CD14-positive monocyte (primary cell): ENCODE measurements at regions of chr2 and their contacts with region 1.

Region 1: GRCh38 chr2:7672027-7672684 is 754.9 kb downstream of the RNF144A start:
- DNase-seq: peak; percentile 36 to 54 (median 51)
- H3K4me3 ChIP-seq: no peak overlapping the region
- H3K4me3 Mint-ChIP-seq: no peak overlapping the region
- H3K27ac ChIP-seq: no peak overlapping the region
- H3K27ac Mint-ChIP-seq: no peak overlapping the region
- H3K4me1 ChIP-seq: peaks cover 0 to 5% of the 10 kb centered on the region in 2 donors
- H3K4me1 Mint-ChIP-seq: peaks cover 3% of the 10 kb centered on the region
- H3K27me3 ChIP-seq: no peaks in the 10 kb centered on the region
- H3K27me3 Mint-ChIP-seq: peaks cover 0 to 3% (median 3%) of the 10 kb centered on the region in 3 donors
- CTCF ChIP-seq: peak; percentile 98

Region 2: DNA sequence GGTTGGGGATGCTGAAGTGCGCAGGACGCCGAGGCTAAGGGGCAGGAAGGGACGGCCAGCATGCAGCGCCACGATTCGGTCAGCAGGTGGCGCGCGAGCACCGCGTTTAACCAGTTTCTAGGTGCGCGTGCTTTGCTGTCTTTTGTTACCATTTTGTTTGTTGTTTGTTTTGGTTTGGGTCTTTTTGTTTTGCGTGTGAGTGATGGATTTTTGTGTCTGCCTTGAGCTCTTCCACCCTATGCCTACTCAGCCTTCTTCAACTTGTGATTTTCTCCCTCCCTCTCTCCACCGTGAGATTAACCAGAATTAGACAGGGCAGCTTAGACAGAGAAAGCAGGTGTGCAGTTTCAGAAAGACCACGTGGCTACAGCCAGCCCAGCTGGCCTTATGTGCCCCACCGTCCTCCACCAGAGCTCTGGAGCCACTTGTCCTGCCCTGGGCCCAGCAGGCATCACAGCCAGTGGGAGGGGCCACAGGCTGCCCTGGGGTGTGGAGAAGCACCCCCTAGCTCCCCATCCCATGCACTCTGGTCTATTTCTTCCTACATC is 574.7 kb before region 1 on chr2:
- intact Hi-C with region 1: loop called (anchors 5 to 10 kb)
- DNase-seq: peak; percentile 59 to 75 (median 69)
- H3K4me3 ChIP-seq: no peak overlapping the region
- H3K4me3 Mint-ChIP-seq: peak overlapping the region in 1 of 2 donors; percentile 83
- H3K27ac ChIP-seq: no peak overlapping the region
- H3K27ac Mint-ChIP-seq: peak overlapping the region in 3 of 7 donors; percentile 1 to 75 (median 32)
- H3K4me1 ChIP-seq: peaks cover 3 to 4% of the 10 kb centered on the region in 2 donors
- H3K4me1 Mint-ChIP-seq: peaks cover 6% of the 10 kb centered on the region
- H3K27me3 ChIP-seq: no peaks in the 10 kb centered on the region
- H3K27me3 Mint-ChIP-seq: peaks cover 0 to 7% (median 3%) of the 10 kb centered on the region in 3 donors
- CTCF ChIP-seq: peak; percentile 97

Region 3: DNA sequence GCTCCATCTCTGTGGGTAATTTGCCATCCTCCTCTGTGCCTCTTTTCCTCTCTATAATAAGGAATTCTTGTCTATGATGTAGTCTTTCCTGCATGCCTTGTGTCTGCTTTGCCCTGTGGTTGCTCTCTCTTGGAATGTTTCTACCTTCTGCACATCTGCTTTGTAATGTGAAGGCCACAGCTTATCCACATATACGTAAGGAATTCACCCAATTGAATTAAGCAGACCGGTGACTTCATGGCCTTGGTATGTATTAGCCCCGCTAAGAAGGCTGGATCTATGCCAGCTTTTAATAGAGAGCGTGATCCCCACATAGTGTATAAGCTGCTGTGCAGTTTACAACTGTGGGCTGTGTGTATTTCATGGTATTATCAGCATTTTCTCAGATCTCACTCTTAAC is 480.2 kb before region 1 on chr2:
- intact Hi-C with region 1: no loop called
- DNase-seq: no peak
- H3K4me3 ChIP-seq: no peak overlapping the region
- H3K4me3 Mint-ChIP-seq: no peak overlapping the region
- H3K27ac ChIP-seq: no peak overlapping the region
- H3K27ac Mint-ChIP-seq: no peak overlapping the region
- H3K4me1 ChIP-seq: no peaks in the 10 kb centered on the region
- H3K4me1 Mint-ChIP-seq: peaks cover 5% of the 10 kb centered on the region
- H3K27me3 ChIP-seq: no peaks in the 10 kb centered on the region
- H3K27me3 Mint-ChIP-seq: peaks cover 0 to 3% (median 0%) of the 10 kb centered on the region in 3 donors
- CTCF ChIP-seq: no peak

Region 4: DNA sequence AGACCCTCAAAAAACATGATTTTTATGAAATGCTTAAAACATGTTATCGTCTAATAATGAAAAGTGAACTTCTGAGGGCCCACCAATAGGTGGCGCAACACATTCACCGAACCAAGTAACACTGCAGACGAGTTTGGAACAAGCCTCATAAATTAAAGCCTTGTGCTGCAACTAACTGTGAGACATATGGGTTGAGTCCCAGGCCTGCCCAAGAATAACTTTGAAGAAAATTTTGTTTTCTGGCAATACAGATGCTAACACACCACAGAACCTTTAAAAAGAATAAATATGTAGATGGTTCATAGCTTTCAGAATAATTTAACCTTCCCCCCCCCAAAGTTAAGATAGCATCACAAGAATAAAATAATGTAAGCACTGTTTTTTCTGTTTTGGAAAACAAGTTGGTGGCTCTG is 469.1 kb before region 1 on chr2:
- intact Hi-C with region 1: loop called in 1 of 2 experiments (anchors 5 kb)
- DNase-seq: peak; percentile 43 to 69 (median 58)
- H3K4me3 ChIP-seq: no peak overlapping the region
- H3K4me3 Mint-ChIP-seq: no peak overlapping the region
- H3K27ac ChIP-seq: no peak overlapping the region
- H3K27ac Mint-ChIP-seq: no peak overlapping the region
- H3K4me1 ChIP-seq: peaks cover 15 to 16% of the 10 kb centered on the region in 2 donors
- H3K4me1 Mint-ChIP-seq: peaks cover 17% of the 10 kb centered on the region
- H3K27me3 ChIP-seq: no peaks in the 10 kb centered on the region
- H3K27me3 Mint-ChIP-seq: no peaks in the 10 kb centered on the region
- CTCF ChIP-seq: peak; percentile 96

Region 5: GRCh38 chr2:7427293-7428060 is 244.7 kb before region 1 on chr2:
- intact Hi-C with region 1: loop called (anchors 2 kb)
- DNase-seq: peak; percentile 29 to 63 (median 47)
- H3K4me3 ChIP-seq: no peak overlapping the region
- H3K4me3 Mint-ChIP-seq: no peak overlapping the region
- H3K27ac ChIP-seq: no peak overlapping the region
- H3K27ac Mint-ChIP-seq: no peak overlapping the region
- H3K4me1 ChIP-seq: peaks cover 49 to 51% of the 10 kb centered on the region in 2 donors
- H3K4me1 Mint-ChIP-seq: peaks cover 48% of the 10 kb centered on the region
- H3K27me3 ChIP-seq: no peaks in the 10 kb centered on the region
- H3K27me3 Mint-ChIP-seq: peaks cover 0 to 1% (median 0%) of the 10 kb centered on the region in 3 donors
- CTCF ChIP-seq: peak; percentile 84

Region 6: GRCh38 chr2:7707723-7708122 is 35.6 kb after region 1 on chr2:
- intact Hi-C with region 1: no loop called
- DNase-seq: no peak
- H3K4me3 ChIP-seq: no peak overlapping the region
- H3K4me3 Mint-ChIP-seq: no peak overlapping the region
- H3K27ac ChIP-seq: no peak overlapping the region
- H3K27ac Mint-ChIP-seq: no peak overlapping the region
- H3K4me1 ChIP-seq: no peaks in the 10 kb centered on the region
- H3K4me1 Mint-ChIP-seq: no peaks in the 10 kb centered on the region
- H3K27me3 ChIP-seq: peaks cover 0 to 1% of the 10 kb centered on the region in 2 donors
- H3K27me3 Mint-ChIP-seq: peaks cover 0 to 5% (median 0%) of the 10 kb centered on the region in 3 donors
- CTCF ChIP-seq: no peak

Region 7: GRCh38 chr2:7725171-7725849 is 53.2 kb after region 1 on chr2:
- intact Hi-C with region 1: no loop called
- DNase-seq: peak in 1 of 3 donors; percentile 5
- H3K4me3 ChIP-seq: no peak overlapping the region
- H3K4me3 Mint-ChIP-seq: peak overlapping the region in 1 of 2 donors; percentile 46
- H3K27ac ChIP-seq: no peak overlapping the region
- H3K27ac Mint-ChIP-seq: peak overlapping the region in 1 of 7 donors; percentile 58
- H3K4me1 ChIP-seq: no peaks in the 10 kb centered on the region
- H3K4me1 Mint-ChIP-seq: peaks cover 4% of the 10 kb centered on the region
- H3K27me3 ChIP-seq: no peaks in the 10 kb centered on the region
- H3K27me3 Mint-ChIP-seq: peaks cover 0 to 8% (median 3%) of the 10 kb centered on the region in 3 donors
- CTCF ChIP-seq: no peak